CD4-positive, alpha-beta T cell (primary cell): ENCODE measurements at regions of chr11 and their contacts with region 1.

Region 1: GRCh38 chr11:67353317-67354074 is at the start of gene POLD4:
- DNase-seq: peak; percentile 90 to 98 (median 96)
- ATAC-seq: peak; percentile 84
- H3K4me3 ChIP-seq: peak within 1 kb of the TSS; percentile 78
- H3K4me3 Mint-ChIP-seq: peak within 1 kb of the TSS; percentile 98
- H3K27ac ChIP-seq: peak within 1 kb of the TSS; percentile 94 to 100
- H3K27ac Mint-ChIP-seq: peak within 1 kb of the TSS; percentile 99
- H3K4me1 ChIP-seq: peaks cover 67% of the 10 kb centered on the region
- H3K4me1 Mint-ChIP-seq: peaks cover 59% of the 10 kb centered on the region
- H3K27me3 ChIP-seq: no peaks in the 10 kb centered on the region
- H3K27me3 Mint-ChIP-seq: no peaks in the 10 kb centered on the region
- CTCF ChIP-seq: no peak
- total RNA-seq, gene POLD4: 31.7 to 39.5 TPM

Region 2: GRCh38 chr11:67160874-67161783 is 192.4 kb before region 1 on chr11:
- CTCF ChIA-PET with region 1: no interaction called
- POLR2A ChIA-PET with region 1: no interaction called
- intact Hi-C with region 1: no loop called
- DNase-seq: peak in 1 of 14 experiments; percentile 7
- ATAC-seq: peak; percentile 34
- H3K4me3 ChIP-seq: no peak overlapping the region
- H3K4me3 Mint-ChIP-seq: no peak overlapping the region
- H3K27ac ChIP-seq: peak overlapping the region in 1 of 2 donors; percentile 37
- H3K27ac Mint-ChIP-seq: peak overlapping the region; percentile 76
- H3K4me1 ChIP-seq: peaks cover 8% of the 10 kb centered on the region
- H3K4me1 Mint-ChIP-seq: peaks cover 73% of the 10 kb centered on the region
- H3K27me3 ChIP-seq: no peaks in the 10 kb centered on the region
- H3K27me3 Mint-ChIP-seq: no peaks in the 10 kb centered on the region
- CTCF ChIP-seq: no peak

Region 3: GRCh38 chr11:67211656-67212436 is 141.7 kb before region 1 on chr11:
- CTCF ChIA-PET with region 1: no interaction called
- POLR2A ChIA-PET with region 1: no interaction called
- intact Hi-C with region 1: no loop called
- DNase-seq: peak in 2 of 14 experiments; percentile 12 to 14
- ATAC-seq: no peak
- H3K4me3 ChIP-seq: no peak overlapping the region
- H3K4me3 Mint-ChIP-seq: no peak overlapping the region
- H3K27ac ChIP-seq: no peak overlapping the region
- H3K27ac Mint-ChIP-seq: peak overlapping the region; percentile 38
- H3K4me1 ChIP-seq: no peaks in the 10 kb centered on the region
- H3K4me1 Mint-ChIP-seq: peaks cover 10% of the 10 kb centered on the region
- H3K27me3 ChIP-seq: no peaks in the 10 kb centered on the region
- H3K27me3 Mint-ChIP-seq: no peaks in the 10 kb centered on the region
- CTCF ChIP-seq: no peak

Region 4: GRCh38 chr11:67288452-67289225 is 64.9 kb before region 1 on chr11:
- CTCF ChIA-PET with region 1: interaction called, 7 read pairs
- POLR2A ChIA-PET with region 1: interaction called, 23 read pairs
- intact Hi-C with region 1: no loop called
- DNase-seq: peak; percentile 79 to 95 (median 89)
- ATAC-seq: peak; percentile 63
- H3K4me3 ChIP-seq: peak overlapping the region; percentile 91
- H3K4me3 Mint-ChIP-seq: peak overlapping the region; percentile 83
- H3K27ac ChIP-seq: peak overlapping the region; percentile 90 to 95
- H3K27ac Mint-ChIP-seq: peak overlapping the region; percentile 90
- H3K4me1 ChIP-seq: peaks cover 86% of the 10 kb centered on the region
- H3K4me1 Mint-ChIP-seq: peaks cover 49% of the 10 kb centered on the region
- H3K27me3 ChIP-seq: no peaks in the 10 kb centered on the region
- H3K27me3 Mint-ChIP-seq: no peaks in the 10 kb centered on the region
- CTCF ChIP-seq: peak; percentile 48

Region 5: DNA sequence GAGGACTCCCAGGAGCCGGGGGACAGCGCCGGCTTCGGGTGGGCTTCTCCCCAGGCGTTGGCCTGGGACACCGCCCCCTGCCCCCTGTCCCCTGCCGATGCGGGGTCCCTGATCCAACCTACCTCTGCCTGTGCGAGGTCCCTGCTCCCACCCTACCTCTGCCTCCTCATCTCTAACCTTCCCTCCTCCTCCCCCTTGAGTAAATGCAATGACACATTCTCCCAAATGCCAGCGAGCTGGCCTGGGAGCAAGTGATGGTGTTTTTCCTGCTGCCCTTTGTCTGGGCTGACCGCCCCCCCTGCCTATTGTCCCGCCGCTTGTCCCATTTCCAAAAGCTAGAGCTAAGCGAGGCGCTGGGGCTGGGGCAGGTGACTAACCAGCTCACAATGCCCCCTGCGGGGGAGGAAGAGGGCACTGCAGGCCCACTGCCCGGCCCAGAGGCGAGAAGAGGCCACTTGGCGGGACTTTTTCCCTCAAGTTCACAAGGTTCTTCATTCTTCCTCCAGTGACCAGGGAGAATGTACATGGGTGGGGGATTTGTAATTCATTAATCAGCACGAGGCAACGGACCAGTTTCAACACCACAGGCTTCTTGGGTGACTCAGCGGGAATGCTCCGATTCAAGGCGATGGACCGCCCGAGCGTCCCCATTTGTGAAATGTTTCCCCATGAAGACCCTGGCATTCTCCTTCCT is 20.6 kb after region 1 on chr11:
- CTCF ChIA-PET with region 1: interaction called, 241 read pairs
- POLR2A ChIA-PET with region 1: interaction called, 81 read pairs
- intact Hi-C with region 1: loop called in 1 of 2 experiments (anchors 1 kb)
- DNase-seq: peak in 10 of 14 experiments; percentile 26 to 83 (median 55)
- ATAC-seq: peak; percentile 46
- H3K4me3 ChIP-seq: peak overlapping the region; percentile 48
- H3K4me3 Mint-ChIP-seq: peak overlapping the region; percentile 91
- H3K27ac ChIP-seq: no peak overlapping the region
- H3K27ac Mint-ChIP-seq: peak overlapping the region; percentile 91
- H3K4me1 ChIP-seq: peaks cover 61% of the 10 kb centered on the region
- H3K4me1 Mint-ChIP-seq: peaks cover 51% of the 10 kb centered on the region
- H3K27me3 ChIP-seq: peaks cover 6 to 16% of the 10 kb centered on the region in 2 experiments
- H3K27me3 Mint-ChIP-seq: peaks cover 42% of the 10 kb centered on the region
- CTCF ChIP-seq: peak; percentile 40

Region 6: GRCh38 chr11:67401495-67402191 is 48.1 kb after region 1 on chr11 and contains the start of gene PPP1CA:
- CTCF ChIA-PET with region 1: interaction called, 7 read pairs
- POLR2A ChIA-PET with region 1: interaction called, 26 read pairs
- intact Hi-C with region 1: no loop called
- DNase-seq: peak; percentile 83 to 96 (median 92)
- ATAC-seq: peak; percentile 69
- H3K4me3 ChIP-seq: peak within 1 kb of the TSS; percentile 98
- H3K4me3 Mint-ChIP-seq: peak within 1 kb of the TSS; percentile 100
- H3K27ac ChIP-seq: peak within 1 kb of the TSS; percentile 62 to 84
- H3K27ac Mint-ChIP-seq: peak within 1 kb of the TSS; percentile 98
- H3K4me1 ChIP-seq: peaks cover 86% of the 10 kb centered on the region
- H3K4me1 Mint-ChIP-seq: peaks cover 56% of the 10 kb centered on the region
- H3K27me3 ChIP-seq: peaks cover 0 to 3% of the 10 kb centered on the region in 2 experiments
- H3K27me3 Mint-ChIP-seq: no peaks in the 10 kb centered on the region
- CTCF ChIP-seq: no peak
- total RNA-seq, gene PPP1CA: 42.0 to 45.5 TPM

Region 7: GRCh38 chr11:67482825-67483798 is 129.6 kb after region 1 on chr11 and contains the start of gene AIP:
- CTCF ChIA-PET with region 1: no interaction called
- POLR2A ChIA-PET with region 1: interaction called, 16 read pairs
- intact Hi-C with region 1: no loop called
- DNase-seq: peak; percentile 94 to 99 (median 97)
- ATAC-seq: peak; percentile 77
- H3K4me3 ChIP-seq: peak within 1 kb of the TSS; percentile 80
- H3K4me3 Mint-ChIP-seq: peak within 1 kb of the TSS; percentile 91
- H3K27ac ChIP-seq: peak within 1 kb of the TSS; percentile 90
- H3K27ac Mint-ChIP-seq: peak within 1 kb of the TSS; percentile 95
- H3K4me1 ChIP-seq: peaks cover 63% of the 10 kb centered on the region
- H3K4me1 Mint-ChIP-seq: peaks cover 56% of the 10 kb centered on the region
- H3K27me3 ChIP-seq: no peaks in the 10 kb centered on the region
- H3K27me3 Mint-ChIP-seq: no peaks in the 10 kb centered on the region
- CTCF ChIP-seq: peak; percentile 37
- total RNA-seq, gene AIP: 115 to 117 TPM

Region 8: GRCh38 chr11:67656278-67656922 is 302.9 kb after region 1 on chr11:
- CTCF ChIA-PET with region 1: no interaction called
- POLR2A ChIA-PET with region 1: no interaction called
- intact Hi-C with region 1: loop called (anchors 5 to 10 kb)
- DNase-seq: peak in 1 of 14 experiments; percentile 14
- ATAC-seq: no peak
- H3K4me3 ChIP-seq: no peak overlapping the region
- H3K4me3 Mint-ChIP-seq: no peak overlapping the region
- H3K27ac ChIP-seq: no peak overlapping the region
- H3K27ac Mint-ChIP-seq: no peak overlapping the region
- H3K4me1 ChIP-seq: peaks cover 3% of the 10 kb centered on the region
- H3K4me1 Mint-ChIP-seq: no peaks in the 10 kb centered on the region
- H3K27me3 ChIP-seq: no peaks in the 10 kb centered on the region
- H3K27me3 Mint-ChIP-seq: no peaks in the 10 kb centered on the region
- CTCF ChIP-seq: no peak

Region 9: GRCh38 chr11:68480852-68481510 is 1127.5 kb after region 1 on chr11:
- CTCF ChIA-PET with region 1: no interaction called
- POLR2A ChIA-PET with region 1: no interaction called
- intact Hi-C with region 1: no loop called
- DNase-seq: no peak
- ATAC-seq: no peak
- H3K4me3 ChIP-seq: no peak overlapping the region
- H3K4me3 Mint-ChIP-seq: no peak overlapping the region
- H3K27ac ChIP-seq: no peak overlapping the region
- H3K27ac Mint-ChIP-seq: peak overlapping the region; percentile 41
- H3K4me1 ChIP-seq: peaks cover 30% of the 10 kb centered on the region
- H3K4me1 Mint-ChIP-seq: peaks cover 84% of the 10 kb centered on the region
- H3K27me3 ChIP-seq: no peaks in the 10 kb centered on the region
- H3K27me3 Mint-ChIP-seq: no peaks in the 10 kb centered on the region
- CTCF ChIP-seq: no peak